Activated naive CD4-positive, alpha-beta T cell treated with anti-CD3 and anti-CD28 coated beads for 36 hours (primary cell): ENCODE measurements at regions of chr17 and their contacts with region 1.

Region 1: GRCh38 chr17:44141717-44142285 is at the start of gene HROB:
- DNase-seq: peak; percentile 100
- H3K4me3 Mint-ChIP-seq: peak within 1 kb of the TSS; percentile 89
- H3K27ac Mint-ChIP-seq: peak within 1 kb of the TSS; percentile 87
- H3K4me1 Mint-ChIP-seq: peaks cover 21% of the 10 kb centered on the region
- H3K27me3 Mint-ChIP-seq: no peaks in the 10 kb centered on the region
- total RNA-seq, gene HROB: 16.9 to 17.6 TPM

Region 2: DNA sequence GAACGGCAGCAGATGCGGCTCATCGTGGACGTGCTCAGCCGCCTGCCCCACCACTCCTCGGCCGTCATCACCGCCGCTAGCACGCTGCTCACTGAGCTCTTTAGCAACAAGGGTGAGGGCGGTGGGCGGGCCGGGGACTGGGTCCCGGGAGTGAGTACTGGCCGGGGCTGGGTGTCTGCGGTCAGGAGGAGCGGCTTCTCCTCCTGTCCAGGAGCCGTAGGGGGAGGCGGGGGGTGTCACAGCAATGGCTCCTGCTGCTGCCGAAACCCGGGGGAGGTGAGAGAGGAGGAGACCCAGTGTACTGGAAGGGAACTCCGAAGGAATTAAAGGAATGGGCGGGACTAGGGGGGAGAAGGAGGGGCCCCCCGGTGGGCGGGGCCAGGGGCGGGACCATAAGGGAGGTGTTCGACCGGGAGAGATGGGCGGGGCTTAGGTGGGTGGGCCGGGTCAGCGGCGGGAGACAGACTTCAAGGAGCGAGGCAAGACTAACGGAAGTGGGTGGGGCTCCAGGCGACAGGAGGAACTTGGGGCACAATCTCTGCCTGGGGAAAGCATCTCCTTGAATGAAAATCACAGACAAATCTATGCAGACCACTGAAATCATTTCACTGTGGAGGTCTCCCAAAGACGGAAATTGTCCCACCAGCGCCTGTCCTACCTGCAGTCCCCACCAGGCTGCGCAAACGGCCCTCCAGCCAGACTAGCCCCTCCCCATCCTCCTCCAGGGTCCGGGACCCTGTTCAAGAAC is 135.0 kb before region 1 on chr17:
- CTCF ChIA-PET with region 1: no interaction called
- intact Hi-C with region 1: loop called (anchors 5 kb)
- DNase-seq: peak; percentile 100
- H3K4me3 Mint-ChIP-seq: peak overlapping the region; percentile 81
- H3K27ac Mint-ChIP-seq: no peak overlapping the region
- H3K4me1 Mint-ChIP-seq: peaks cover 31% of the 10 kb centered on the region
- H3K27me3 Mint-ChIP-seq: peaks cover 18% of the 10 kb centered on the region

Region 3: DNA sequence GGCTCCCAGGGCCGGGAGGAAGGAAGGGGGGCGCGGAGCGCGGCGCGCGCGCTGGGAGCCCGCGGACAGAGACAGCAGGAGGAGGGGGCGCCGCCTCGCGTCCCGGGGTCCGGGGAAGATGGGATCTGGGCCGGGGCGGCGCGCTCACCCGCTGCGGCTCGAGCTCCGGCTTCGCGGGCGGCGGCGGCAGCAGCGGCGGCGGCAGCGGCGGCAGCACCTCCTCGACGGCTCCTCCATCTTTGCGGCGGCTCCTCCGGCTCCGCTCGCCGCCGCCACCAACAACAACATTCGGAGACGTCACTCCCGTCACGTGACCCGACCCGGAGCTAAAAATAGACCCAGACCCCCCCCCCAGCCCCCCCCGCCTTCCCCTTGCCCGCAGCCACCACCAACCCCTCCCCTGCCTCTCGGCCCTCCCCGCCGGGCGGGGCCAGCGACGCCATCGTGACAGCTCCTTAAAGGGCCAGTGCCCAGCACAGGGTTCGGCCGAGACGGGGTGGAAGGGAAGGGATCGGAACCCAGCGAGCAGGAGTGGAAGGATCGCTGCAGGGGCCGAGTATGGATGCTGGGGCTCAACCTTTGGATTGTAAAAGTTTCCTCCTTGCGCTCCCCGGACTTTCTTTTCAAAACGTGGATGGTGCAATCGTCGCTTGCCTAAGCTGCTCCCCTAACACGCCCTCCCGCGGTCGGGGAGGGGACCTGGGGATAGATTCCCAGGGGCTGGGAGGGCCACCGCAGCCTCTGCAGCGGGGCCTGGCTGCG is 18.3 kb before region 1 on chr17 and contains the start of gene HDAC5:
- CTCF ChIA-PET with region 1: interaction called, 4 read pairs
- intact Hi-C with region 1: loop called (anchors 1 kb)
- DNase-seq: peak; percentile 97
- H3K4me3 Mint-ChIP-seq: peak within 1 kb of the TSS; percentile 96
- H3K27ac Mint-ChIP-seq: peak within 1 kb of the TSS; percentile 97
- H3K4me1 Mint-ChIP-seq: peaks cover 32% of the 10 kb centered on the region
- H3K27me3 Mint-ChIP-seq: no peaks in the 10 kb centered on the region
- total RNA-seq, gene HDAC5: 17.9 to 18.9 TPM

Region 4: DNA sequence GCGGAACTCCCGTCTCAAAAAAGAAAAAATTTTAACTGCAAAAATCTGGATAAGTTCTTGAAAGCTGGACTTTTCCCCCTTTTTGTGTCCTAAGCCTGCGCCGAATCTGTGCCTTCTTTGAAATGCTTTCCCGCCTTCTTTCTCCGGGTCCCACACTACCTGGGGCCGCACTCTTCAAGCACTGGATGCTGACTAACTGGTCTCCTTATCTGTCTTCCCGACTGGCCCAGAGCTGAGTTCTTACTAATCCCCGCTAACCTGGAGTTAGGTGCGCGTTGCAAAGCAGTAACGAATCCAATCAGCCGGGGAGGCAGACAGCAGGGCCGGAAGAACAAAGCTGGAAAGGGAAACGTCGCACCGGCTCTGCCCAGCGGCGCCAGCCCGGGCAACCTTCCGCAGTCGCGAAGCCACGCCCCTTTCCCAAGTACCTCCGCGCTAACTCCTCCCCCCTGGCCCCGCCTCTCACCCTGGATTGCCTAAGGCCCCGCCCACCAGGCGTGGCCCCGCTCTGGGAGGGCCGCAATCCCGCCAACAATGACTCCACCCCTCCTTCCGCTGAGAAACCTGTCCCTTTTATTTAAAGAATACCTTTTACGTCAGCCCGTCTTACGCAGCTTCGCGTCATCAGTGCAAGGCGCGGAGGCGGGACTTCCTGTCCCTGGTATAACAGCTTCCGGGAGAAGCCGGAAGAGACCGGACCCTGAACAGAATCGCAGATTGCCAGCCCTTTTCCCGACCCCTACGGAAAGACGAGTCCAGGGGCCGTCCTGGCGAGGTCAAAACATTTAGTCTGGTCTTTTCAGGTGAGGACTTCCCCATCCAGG is 44.7 kb after region 1 on chr17 and contains the start of gene TMUB2:
- CTCF ChIA-PET with region 1: interaction called, 3 read pairs
- intact Hi-C with region 1: loop called (anchors 1 kb)
- DNase-seq: peak; percentile 100
- H3K4me3 Mint-ChIP-seq: peak within 1 kb of the TSS; percentile 100
- H3K27ac Mint-ChIP-seq: peak within 1 kb of the TSS; percentile 99
- H3K4me1 Mint-ChIP-seq: peaks cover 43% of the 10 kb centered on the region
- H3K27me3 Mint-ChIP-seq: no peaks in the 10 kb centered on the region
- total RNA-seq, gene TMUB2: 21.2 to 22.9 TPM

Region 5: GRCh38 chr17:44199553-44200477 is 58.0 kb after region 1 on chr17 and contains the start of gene ATXN7L3:
- CTCF ChIA-PET with region 1: no interaction called
- intact Hi-C with region 1: loop called (anchors 1 kb)
- DNase-seq: peak; percentile 100
- H3K4me3 Mint-ChIP-seq: peak within 1 kb of the TSS; percentile 86
- H3K27ac Mint-ChIP-seq: peak within 1 kb of the TSS; percentile 91
- H3K4me1 Mint-ChIP-seq: peaks cover 36% of the 10 kb centered on the region
- H3K27me3 Mint-ChIP-seq: no peaks in the 10 kb centered on the region
- total RNA-seq, gene ATXN7L3: 53.3 to 53.9 TPM

Region 6: GRCh38 chr17:44324571-44325275 is 182.9 kb after region 1 on chr17 and contains the start of gene SLC25A39:
- CTCF ChIA-PET with region 1: no interaction called
- intact Hi-C with region 1: loop called (anchors 1 kb)
- DNase-seq: peak; percentile 93
- H3K4me3 Mint-ChIP-seq: peak within 1 kb of the TSS; percentile 87
- H3K27ac Mint-ChIP-seq: peak within 1 kb of the TSS; percentile 87
- H3K4me1 Mint-ChIP-seq: peaks cover 30% of the 10 kb centered on the region
- H3K27me3 Mint-ChIP-seq: no peaks in the 10 kb centered on the region
- total RNA-seq, gene SLC25A39: 146 to 149 TPM